HepG2 (cell line): ENCODE measurements at regions of chr9 and their contacts with region 1.

Region 1: DNA sequence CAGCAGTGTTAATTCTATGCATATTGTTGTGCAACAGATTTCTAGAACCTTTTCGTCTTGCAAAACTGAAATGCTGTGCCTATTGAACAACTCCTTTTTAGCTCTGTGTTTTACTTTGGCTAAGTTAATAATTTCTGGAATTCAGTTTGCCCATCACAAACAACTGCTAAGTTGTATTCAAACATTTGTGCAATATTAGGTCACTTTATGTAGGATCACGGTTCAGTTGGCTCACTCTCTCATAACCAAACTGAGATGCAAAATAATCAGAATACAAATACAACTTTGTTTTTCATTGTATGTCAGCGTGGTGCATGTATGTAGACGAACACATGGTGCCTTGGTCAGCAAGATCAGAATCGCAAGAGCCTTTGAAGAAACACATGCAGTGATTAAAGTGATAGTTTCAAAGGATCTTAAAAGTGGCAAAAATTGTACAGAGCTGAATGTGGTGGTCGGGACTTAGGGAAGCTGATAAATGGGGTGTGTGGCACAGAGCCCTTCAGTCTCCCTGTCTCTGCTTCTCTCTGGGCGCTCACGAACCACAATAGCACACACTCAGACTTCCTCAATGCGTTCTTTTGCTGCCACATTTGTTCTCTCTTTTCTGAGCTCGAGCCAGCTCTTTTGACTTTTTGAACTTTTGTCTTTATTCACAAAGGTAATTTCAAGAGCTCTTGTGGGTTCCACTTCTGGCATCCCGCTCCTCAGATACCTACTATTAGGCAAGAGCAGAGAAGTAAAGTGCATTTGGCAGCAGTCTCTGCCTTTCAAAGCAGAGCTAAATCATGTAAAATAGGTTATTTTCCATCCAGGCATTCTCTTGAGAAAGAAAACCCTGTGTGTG is 112.4 kb upstream of the CTSL start:
- DNase-seq: peak; percentile 96
- ATAC-seq: peak; percentile 93
- H3K4me3 ChIP-seq: peak overlapping the region in 2 of 3 experiments; percentile 0 to 41; a peak in 2 of 6 replicates
- H3K27ac ChIP-seq: peak overlapping the region; percentile 93
- H3K4me1 ChIP-seq: peaks cover 61% of the 10 kb centered on the region
- H3K27me3 ChIP-seq: no peaks in the 10 kb centered on the region
- CTCF ChIP-seq: no peak
- EP300 ChIP-seq: peak in 1 of 2 experiments; percentile 93; a peak in 2 of 4 replicates
- POLR2A ChIP-seq: 0 out of 4 replicates have a peak, but pooled peaks of 1 of the 2 experiments have one; percentile 38
- RAD21 ChIP-seq: no peak

Region 2: DNA sequence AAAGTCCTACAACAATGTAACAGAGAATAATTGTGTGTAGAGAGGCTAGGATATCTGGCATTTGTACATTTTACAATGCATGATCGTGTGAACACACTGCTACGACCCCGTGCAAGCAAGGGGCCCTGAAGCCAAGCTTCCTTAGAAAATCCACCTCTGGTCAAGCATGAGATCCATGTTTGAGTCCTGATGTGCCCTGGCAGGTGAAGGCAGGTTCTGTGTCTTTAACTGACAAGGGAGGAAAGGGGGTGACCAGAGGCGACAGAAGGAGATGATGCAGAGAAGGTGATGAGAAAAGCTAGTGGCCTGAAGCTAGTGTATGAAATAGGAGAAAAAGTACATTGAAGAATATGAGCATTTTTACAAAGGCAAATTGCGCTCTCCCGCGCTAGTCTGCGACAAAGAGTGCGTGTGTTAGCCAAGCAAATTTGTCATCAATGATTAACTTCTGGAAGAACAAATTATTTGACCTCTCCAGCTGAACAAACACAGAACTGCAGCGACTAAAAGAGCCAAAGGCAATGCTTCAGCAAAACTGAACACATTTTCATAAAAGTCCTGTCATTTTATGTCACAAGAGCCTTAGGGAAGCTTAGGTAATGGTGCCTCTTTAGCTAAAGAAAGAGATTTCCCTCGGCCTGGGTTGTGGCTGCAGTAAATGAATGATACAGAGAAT is 217.5 kb before region 1 on chr9:
- CTCF ChIA-PET with region 1: no interaction called
- POLR2A ChIA-PET with region 1: no interaction called
- in situ Hi-C with region 1: no loop called
- intact Hi-C with region 1: no loop called
- DNase-seq: peak; percentile 91
- ATAC-seq: peak; percentile 99
- H3K4me3 ChIP-seq: peak overlapping the region in 1 of 3 experiments; percentile 0; a peak in 2 of 6 replicates
- H3K27ac ChIP-seq: no peak overlapping the region
- H3K4me1 ChIP-seq: peaks cover 23% of the 10 kb centered on the region
- H3K27me3 ChIP-seq: peaks cover 0 to 9% of the 10 kb centered on the region in 2 experiments; a peak in 3 of 5 replicates
- CTCF ChIP-seq: peak; percentile 19; the same call in 1 of the 2 replicates
- EP300 ChIP-seq: peak in 1 of 2 experiments; percentile 64; a peak in 2 of 4 replicates
- POLR2A ChIP-seq: no peak
- RAD21 ChIP-seq: no peak

Region 3: DNA sequence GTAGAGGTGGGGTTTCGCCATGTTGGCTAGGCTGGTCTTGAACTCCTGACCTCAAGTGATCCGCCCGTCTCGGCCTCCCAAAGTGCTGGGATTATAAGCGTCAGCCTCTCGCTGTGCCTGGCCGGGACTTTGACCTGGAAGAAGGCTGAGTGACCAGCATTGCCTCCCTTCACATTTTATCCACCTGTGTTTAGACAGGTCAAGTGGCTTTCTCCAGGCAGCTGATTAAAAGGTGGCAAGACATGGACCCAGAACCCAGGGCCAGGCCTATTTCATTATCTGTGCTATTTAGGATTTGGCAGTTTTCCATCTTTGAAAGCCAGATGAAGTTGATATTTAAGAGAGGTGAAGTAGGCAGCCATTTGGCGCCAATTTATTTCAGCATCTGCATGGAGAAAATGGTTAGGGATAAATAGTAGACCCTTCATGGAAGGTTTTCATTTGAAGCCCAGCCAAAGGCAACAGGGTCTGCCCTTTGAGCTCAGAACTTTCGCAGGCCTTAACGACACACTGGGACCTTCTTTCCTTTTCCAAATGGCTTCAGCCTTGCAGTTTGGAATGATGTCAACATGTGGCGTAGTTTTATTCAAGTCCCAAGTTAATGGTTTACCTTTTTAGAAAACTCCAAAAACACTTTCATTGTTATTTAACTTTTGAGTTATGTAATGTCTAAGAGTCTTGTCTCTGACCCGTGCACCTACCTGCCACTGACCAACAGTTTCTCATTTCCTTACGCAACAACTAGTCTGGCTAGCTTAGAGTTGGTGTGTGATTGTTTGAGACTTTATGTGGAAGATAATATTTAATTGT is 107.4 kb before region 1 on chr9:
- CTCF ChIA-PET with region 1: no interaction called
- POLR2A ChIA-PET with region 1: interaction called, 19 read pairs
- in situ Hi-C with region 1: no loop called
- intact Hi-C with region 1: no loop called
- DNase-seq: peak; percentile 96
- ATAC-seq: peak; percentile 81
- H3K4me3 ChIP-seq: no peak overlapping the region
- H3K27ac ChIP-seq: peak overlapping the region; percentile 72
- H3K4me1 ChIP-seq: peaks cover 62% of the 10 kb centered on the region
- H3K27me3 ChIP-seq: no peaks in the 10 kb centered on the region
- CTCF ChIP-seq: peak; percentile 41
- EP300 ChIP-seq: peak in 1 of 2 experiments; percentile 74; a peak in 2 of 4 replicates
- POLR2A ChIP-seq: no peak
- RAD21 ChIP-seq: no peak

Region 4: GRCh38 chr9:87581513-87581912 is 32.0 kb before region 1 on chr9:
- CTCF ChIA-PET with region 1: no interaction called
- POLR2A ChIA-PET with region 1: interaction called, 10 read pairs
- in situ Hi-C with region 1: no loop called
- intact Hi-C with region 1: no loop called
- DNase-seq: no peak
- ATAC-seq: no peak
- H3K4me3 ChIP-seq: no peak overlapping the region
- H3K27ac ChIP-seq: peak overlapping the region; percentile 24
- H3K4me1 ChIP-seq: peaks cover 71% of the 10 kb centered on the region
- H3K27me3 ChIP-seq: no peaks in the 10 kb centered on the region
- CTCF ChIP-seq: no peak
- EP300 ChIP-seq: no peak
- POLR2A ChIP-seq: no peak
- RAD21 ChIP-seq: no peak

Region 5: GRCh38 chr9:87599901-87600610 is 13.4 kb before region 1 on chr9:
- CTCF ChIA-PET with region 1: no interaction called
- POLR2A ChIA-PET with region 1: interaction called, 23 read pairs
- in situ Hi-C with region 1: no loop called
- intact Hi-C with region 1: no loop called
- DNase-seq: peak; percentile 73
- ATAC-seq: peak; percentile 78
- H3K4me3 ChIP-seq: no peak overlapping the region
- H3K27ac ChIP-seq: peak overlapping the region; percentile 49
- H3K4me1 ChIP-seq: peaks cover 47% of the 10 kb centered on the region
- H3K27me3 ChIP-seq: no peaks in the 10 kb centered on the region
- CTCF ChIP-seq: no peak
- EP300 ChIP-seq: no peak
- POLR2A ChIP-seq: no peak
- RAD21 ChIP-seq: no peak